Heart left ventricle (tissue), 16 donors: ENCODE measurements at regions of chr2 and their contacts with region 1.

Region 1: DNA sequence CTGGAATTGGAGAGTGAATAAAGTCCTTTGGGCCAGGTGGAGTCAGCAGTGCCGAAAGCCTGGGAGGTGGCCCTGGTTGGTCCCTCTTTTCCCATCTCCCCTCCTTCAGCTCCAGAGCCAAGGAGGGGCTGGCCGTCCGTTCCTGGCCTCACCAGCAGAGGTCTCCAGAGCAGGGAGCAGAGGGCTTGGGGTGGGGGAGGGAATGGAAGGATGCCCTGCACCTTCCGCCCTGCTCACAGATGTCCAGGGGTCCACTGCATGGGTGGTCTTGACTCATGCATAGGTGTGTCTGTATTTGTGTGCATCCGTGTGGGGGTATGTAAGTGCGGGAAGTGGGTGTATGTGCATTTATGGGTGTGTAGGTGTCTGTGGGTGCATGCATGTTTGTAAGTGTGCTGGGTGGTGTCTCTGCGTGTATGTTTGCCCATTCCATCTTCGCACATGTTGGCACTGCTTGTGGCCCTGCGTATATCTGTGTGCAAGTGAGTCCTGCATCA is 201.8 kb downstream of the ZFP36L2 start:
- DNase-seq: peak; percentile 68 to 81 (median 77)
- ATAC-seq: peak in 3 of 4 donors; percentile 78 to 82 (median 78)
- H3K4me3 ChIP-seq: no peak overlapping the region
- H3K27ac ChIP-seq: peak overlapping the region in 1 of 12 donors; percentile 39
- H3K4me1 ChIP-seq: peaks cover 0 to 37% (median 27%) of the 10 kb centered on the region in 12 donors
- H3K27me3 ChIP-seq: no peaks in the 10 kb centered on the region
- CTCF ChIP-seq: peak; percentile 69 to 96 (median 82)
- POLR2A ChIP-seq: no peak

Region 2: GRCh38 chr2:42874949-42875801 is 149.4 kb before region 1 on chr2:
- intact Hi-C with region 1: no loop called
- DNase-seq: peak; percentile 75 to 84 (median 77)
- ATAC-seq: peak; percentile 56 to 85 (median 76)
- H3K4me3 ChIP-seq: no peak overlapping the region
- H3K27ac ChIP-seq: peak overlapping the region; percentile 74 to 93 (median 84)
- H3K4me1 ChIP-seq: peaks cover 6 to 81% (median 62%) of the 10 kb centered on the region in 12 donors
- H3K27me3 ChIP-seq: no peaks in the 10 kb centered on the region
- CTCF ChIP-seq: no peak
- POLR2A ChIP-seq: no peak

Region 3: GRCh38 chr2:42944779-42945415 is 79.7 kb before region 1 on chr2:
- intact Hi-C with region 1: loop called in 1 of 10 experiments (anchors 5 kb)
- DNase-seq: no peak
- ATAC-seq: no peak
- H3K4me3 ChIP-seq: no peak overlapping the region
- H3K27ac ChIP-seq: peak overlapping the region in 1 of 12 donors; percentile 6
- H3K4me1 ChIP-seq: peaks cover 0 to 32% (median 16%) of the 10 kb centered on the region in 12 donors
- H3K27me3 ChIP-seq: no peaks in the 10 kb centered on the region
- CTCF ChIP-seq: no peak
- POLR2A ChIP-seq: no peak

Region 4: DNA sequence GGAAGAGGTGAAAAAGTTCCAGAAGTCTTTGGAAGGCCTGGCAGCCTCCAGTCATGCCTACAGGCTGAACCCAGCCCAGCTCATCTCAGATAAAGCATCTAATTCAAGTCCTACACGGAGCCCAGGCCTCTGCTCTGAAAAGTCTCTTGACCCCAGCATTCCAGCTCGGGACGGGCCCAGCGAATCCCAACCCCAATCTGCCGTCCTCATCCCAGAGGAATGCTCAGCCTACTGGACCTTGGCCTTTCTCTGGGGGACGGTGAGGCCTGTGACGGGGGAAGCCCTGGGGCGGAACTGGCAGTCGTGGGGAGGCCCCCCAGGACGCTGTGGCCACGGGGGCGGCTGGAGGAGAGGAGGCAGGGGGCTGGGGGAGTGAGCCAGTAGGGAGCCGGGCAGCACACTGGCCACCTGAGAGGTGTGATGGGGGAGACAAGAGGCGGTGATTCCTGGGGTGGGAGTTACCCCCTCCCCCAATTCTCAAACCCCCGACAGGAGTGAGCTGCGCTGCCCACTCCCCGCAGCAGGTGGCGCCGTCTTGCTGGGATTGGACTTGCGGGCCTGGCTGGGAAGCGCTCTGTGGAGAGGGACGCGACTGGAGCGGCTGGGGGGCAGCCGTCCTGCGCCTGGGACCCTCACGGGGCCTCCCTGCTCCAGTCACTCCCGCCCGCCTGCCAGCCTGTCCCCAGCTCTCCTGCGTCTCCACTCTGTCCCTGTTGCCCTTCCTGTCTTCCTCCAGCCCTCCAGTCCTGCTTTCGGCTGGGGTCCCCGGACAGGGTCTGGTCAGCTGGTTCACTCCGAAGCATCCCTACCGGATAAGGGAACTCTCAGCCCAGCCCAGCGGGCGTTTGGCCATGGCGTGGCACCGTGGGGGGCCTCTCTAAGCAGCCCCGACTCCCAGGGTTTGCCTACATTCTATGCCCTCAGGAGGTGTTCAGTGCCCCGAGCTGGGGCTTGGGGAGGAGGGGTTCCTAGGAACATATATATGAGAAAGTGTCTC is 49.5 kb before region 1 on chr2:
- intact Hi-C with region 1: loop called (anchors 5 to 10 kb)
- DNase-seq: peak; percentile 74 to 90 (median 79)
- ATAC-seq: peak; percentile 57 to 91 (median 87)
- H3K4me3 ChIP-seq: peak overlapping the region in 11 of 12 donors; percentile 7 to 59 (median 48)
- H3K27ac ChIP-seq: peak overlapping the region in 10 of 12 donors; percentile 22 to 83 (median 48)
- H3K4me1 ChIP-seq: peaks cover 0 to 23% (median 12%) of the 10 kb centered on the region in 12 donors
- H3K27me3 ChIP-seq: no peaks in the 10 kb centered on the region
- CTCF ChIP-seq: peak; percentile 72 to 95 (median 89)
- POLR2A ChIP-seq: no peak

Region 5: DNA sequence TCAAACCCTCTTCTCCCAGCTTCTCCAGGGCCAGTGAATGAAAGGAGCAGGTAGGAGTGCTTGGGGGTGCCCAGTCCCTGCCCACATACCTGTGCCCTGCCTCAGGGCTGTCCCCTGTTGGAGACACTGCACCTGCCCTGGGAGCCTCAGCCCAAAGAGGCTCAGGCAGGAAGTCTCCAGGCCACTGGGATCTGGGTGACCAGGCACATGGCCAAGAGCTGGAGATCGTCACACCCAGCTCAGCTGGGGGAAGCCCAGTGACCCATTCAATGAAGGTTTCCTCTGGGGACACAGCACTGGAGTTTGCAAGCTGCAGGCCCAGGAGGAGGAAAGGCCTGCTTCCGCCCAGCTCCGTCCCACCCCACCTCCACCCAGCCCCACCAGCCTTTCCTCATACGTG is 45.5 kb after region 1 on chr2:
- intact Hi-C with region 1: loop called in 3 of 10 experiments (anchors 5 kb)
- DNase-seq: peak; percentile 83 to 89 (median 86)
- ATAC-seq: peak; percentile 41 to 79 (median 55)
- H3K4me3 ChIP-seq: no peak overlapping the region
- H3K27ac ChIP-seq: peak overlapping the region in 9 of 12 donors; percentile 62 to 80 (median 72)
- H3K4me1 ChIP-seq: peaks cover 5 to 64% (median 48%) of the 10 kb centered on the region in 12 donors
- H3K27me3 ChIP-seq: no peaks in the 10 kb centered on the region
- CTCF ChIP-seq: peak in 1 of 12 donors; percentile 24
- POLR2A ChIP-seq: no peak

Region 6: DNA sequence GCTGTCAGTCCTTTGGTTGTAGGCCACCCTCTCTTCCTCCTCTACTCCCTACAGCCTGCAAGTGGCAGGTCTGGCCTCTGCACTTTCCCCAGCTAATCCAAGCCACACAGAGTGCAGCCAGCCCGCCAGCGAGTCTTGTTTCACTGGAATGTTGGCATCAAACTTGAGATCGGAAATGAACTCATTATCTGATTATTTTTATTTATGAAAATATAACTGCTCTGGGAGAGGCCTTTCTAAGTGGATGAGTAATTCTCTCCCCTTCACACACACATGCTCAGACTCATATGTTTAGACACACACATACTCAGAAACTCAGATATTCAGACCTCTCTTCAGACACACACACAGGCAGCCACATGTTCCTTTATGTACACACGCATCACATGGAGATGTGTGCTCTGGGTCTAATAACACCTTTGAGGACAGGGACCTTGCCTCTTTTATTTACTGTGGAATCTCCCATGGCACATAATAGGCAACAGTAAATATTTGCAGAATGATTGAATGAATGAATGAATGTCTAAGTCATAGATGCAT is 50.6 kb after region 1 on chr2:
- intact Hi-C with region 1: loop called in 2 of 10 experiments (anchors 5 kb)
- DNase-seq: peak; percentile 81 to 88 (median 86)
- ATAC-seq: peak; percentile 59 to 81 (median 80)
- H3K4me3 ChIP-seq: no peak overlapping the region
- H3K27ac ChIP-seq: peak overlapping the region; percentile 58 to 93 (median 76)
- H3K4me1 ChIP-seq: peaks cover 12 to 76% (median 56%) of the 10 kb centered on the region in 12 donors
- H3K27me3 ChIP-seq: no peaks in the 10 kb centered on the region
- CTCF ChIP-seq: peak in 3 of 12 donors; percentile 16 to 21 (median 20)
- POLR2A ChIP-seq: no peak

Region 7: DNA sequence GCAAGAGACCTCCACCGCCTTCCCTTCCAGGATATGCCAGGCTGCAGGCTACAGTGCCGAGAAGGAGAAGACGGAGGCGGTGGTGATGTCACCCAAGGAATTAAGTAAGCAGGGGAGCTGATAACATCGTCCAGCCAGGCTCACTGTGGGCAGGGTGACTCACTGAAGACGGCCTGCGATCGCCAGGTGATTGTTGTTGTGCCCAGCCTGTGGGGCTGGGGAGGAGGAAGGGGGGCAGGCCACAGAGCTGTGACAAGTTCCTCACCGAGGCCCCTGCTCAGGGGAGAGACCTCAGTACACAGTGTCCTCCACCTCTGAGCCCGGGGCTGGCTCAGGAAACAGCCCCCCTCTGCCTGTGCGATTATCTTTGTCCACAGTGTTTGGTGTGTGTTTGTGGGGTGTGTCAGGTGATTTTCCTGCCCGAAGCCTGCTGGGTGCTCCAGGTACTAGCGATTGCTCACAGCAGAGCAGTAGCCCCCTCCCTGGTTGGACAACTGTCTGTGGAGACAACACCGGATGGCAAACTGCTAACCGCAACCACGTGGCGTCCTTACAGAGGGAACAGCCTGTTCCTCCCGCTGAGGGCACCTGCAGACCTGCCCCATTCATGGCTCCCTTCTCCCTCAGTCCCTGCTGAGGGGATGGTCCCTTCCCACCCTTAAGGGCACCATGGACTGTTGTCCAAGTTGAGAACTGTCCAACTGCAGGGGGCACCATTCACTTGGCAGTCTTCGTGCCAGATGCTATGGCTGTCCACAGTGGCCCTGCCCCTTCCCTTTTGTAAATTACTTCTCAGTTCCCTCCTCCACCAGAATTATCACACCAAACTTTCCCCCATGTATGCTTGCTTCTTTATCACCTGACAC is 106.7 kb after region 1 on chr2:
- intact Hi-C with region 1: loop called in 6 of 10 experiments (anchors 5 to 10 kb)
- DNase-seq: peak; percentile 65 to 87 (median 74)
- ATAC-seq: peak; percentile 57 to 66 (median 60)
- H3K4me3 ChIP-seq: peak overlapping the region in 1 of 12 donors; percentile 6
- H3K27ac ChIP-seq: peak overlapping the region; percentile 19 to 94 (median 60)
- H3K4me1 ChIP-seq: peaks cover 7 to 97% (median 43%) of the 10 kb centered on the region in 12 donors
- H3K27me3 ChIP-seq: no peaks in the 10 kb centered on the region
- CTCF ChIP-seq: peak; percentile 23 to 63 (median 45)
- POLR2A ChIP-seq: no peak

Region 8: GRCh38 chr2:43169987-43170386 is 145.4 kb after region 1 on chr2:
- intact Hi-C with region 1: loop called in 1 of 10 experiments (anchors 5 kb)
- DNase-seq: peak in 1 of 5 donors; percentile 69
- ATAC-seq: no peak
- H3K4me3 ChIP-seq: no peak overlapping the region
- H3K27ac ChIP-seq: peak overlapping the region in 5 of 12 donors; percentile 34 to 85 (median 67)
- H3K4me1 ChIP-seq: peaks cover 0 to 73% (median 31%) of the 10 kb centered on the region in 12 donors
- H3K27me3 ChIP-seq: no peaks in the 10 kb centered on the region
- CTCF ChIP-seq: peak; percentile 15 to 54 (median 38)
- POLR2A ChIP-seq: no peak